CD4-positive, alpha-beta memory T cell (primary cell): ENCODE measurements at regions of chr16 and their contacts with region 1.

Region 1: DNA sequence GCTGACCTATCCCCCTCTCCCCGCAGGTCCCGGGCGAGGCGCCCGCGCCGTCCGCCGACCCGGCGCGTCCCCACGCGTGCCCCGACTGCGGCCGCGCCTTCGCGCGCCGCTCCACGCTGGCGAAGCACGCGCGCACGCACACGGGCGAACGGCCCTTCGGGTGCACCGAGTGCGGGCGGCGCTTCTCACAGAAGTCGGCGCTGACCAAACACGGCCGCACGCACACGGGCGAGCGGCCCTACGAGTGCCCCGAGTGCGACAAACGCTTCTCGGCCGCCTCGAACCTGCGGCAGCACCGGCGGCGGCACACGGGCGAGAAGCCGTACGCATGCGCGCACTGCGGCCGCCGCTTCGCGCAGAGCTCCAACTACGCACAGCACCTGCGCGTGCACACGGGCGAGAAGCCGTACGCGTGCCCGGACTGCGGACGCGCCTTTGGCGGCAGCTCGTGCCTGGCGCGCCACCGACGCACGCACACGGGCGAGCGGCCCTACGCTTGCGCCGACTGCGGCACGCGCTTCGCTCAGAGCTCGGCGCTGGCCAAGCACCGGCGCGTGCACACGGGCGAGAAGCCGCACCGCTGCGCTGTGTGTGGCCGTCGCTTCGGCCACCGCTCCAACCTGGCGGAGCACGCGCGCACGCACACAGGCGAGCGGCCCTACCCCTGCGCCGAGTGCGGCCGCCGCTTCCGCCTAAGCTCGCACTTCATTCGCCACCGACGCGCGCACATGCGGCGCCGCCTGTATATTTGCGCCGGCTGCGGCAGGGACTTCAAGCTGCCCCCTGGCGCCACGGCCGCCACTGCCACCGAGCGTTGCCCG is 10.3 kb downstream of the ZNF771 start:
- DNase-seq: peak; percentile 89 to 93 (median 91)
- H3K4me3 ChIP-seq: peak overlapping the region; percentile 12 to 68
- H3K4me3 Mint-ChIP-seq: peak overlapping the region; percentile 39 to 85 (median 68)
- H3K27ac ChIP-seq: peak overlapping the region; percentile 61
- H3K27ac Mint-ChIP-seq: peak overlapping the region in 3 of 7 donors; percentile 41 to 90 (median 74)
- H3K4me1 ChIP-seq: peaks cover 15% of the 10 kb centered on the region
- H3K4me1 Mint-ChIP-seq: peaks cover 6 to 24% (median 13%) of the 10 kb centered on the region in 4 donors
- H3K27me3 ChIP-seq: no peaks in the 10 kb centered on the region
- H3K27me3 Mint-ChIP-seq: no peaks in the 10 kb centered on the region

Region 2: GRCh38 chr16:30183233-30184095 is 234.3 kb before region 1 on chr16 and contains the start of gene CORO1A:
- CTCF ChIA-PET with region 1: interaction called, 3 read pairs
- POLR2A ChIA-PET with region 1: interaction called, 15 read pairs
- intact Hi-C with region 1: no loop called
- DNase-seq: peak; percentile 80 to 87 (median 84)
- H3K4me3 ChIP-seq: peak within 1 kb of the TSS; percentile 91 to 93
- H3K4me3 Mint-ChIP-seq: peak within 1 kb of the TSS; percentile 94 to 99 (median 98)
- H3K27ac ChIP-seq: peak within 1 kb of the TSS; percentile 77
- H3K27ac Mint-ChIP-seq: peak within 1 kb of the TSS; percentile 96 to 99 (median 97)
- H3K4me1 ChIP-seq: peaks cover 40% of the 10 kb centered on the region
- H3K4me1 Mint-ChIP-seq: peaks cover 15 to 59% (median 29%) of the 10 kb centered on the region in 4 donors
- H3K27me3 ChIP-seq: no peaks in the 10 kb centered on the region
- H3K27me3 Mint-ChIP-seq: no peaks in the 10 kb centered on the region
- total RNA-seq, gene CORO1A: 745 to 769 TPM

Region 3: GRCh38 chr16:30378236-30379204 is 39.2 kb before region 1 on chr16:
- CTCF ChIA-PET with region 1: interaction called, 3 read pairs
- POLR2A ChIA-PET with region 1: interaction called, 540 read pairs
- intact Hi-C with region 1: no loop called
- DNase-seq: peak; percentile 98 to 99 (median 99)
- H3K4me3 ChIP-seq: peak overlapping the region; percentile 84 to 91
- H3K4me3 Mint-ChIP-seq: peak overlapping the region; percentile 91 to 100 (median 96)
- H3K27ac ChIP-seq: peak overlapping the region; percentile 96
- H3K27ac Mint-ChIP-seq: peak overlapping the region; percentile 97 to 100 (median 100)
- H3K4me1 ChIP-seq: peaks cover 69% of the 10 kb centered on the region
- H3K4me1 Mint-ChIP-seq: peaks cover 32 to 71% (median 48%) of the 10 kb centered on the region in 4 donors
- H3K27me3 ChIP-seq: no peaks in the 10 kb centered on the region
- H3K27me3 Mint-ChIP-seq: no peaks in the 10 kb centered on the region

Region 4: GRCh38 chr16:30445408-30446202 is 27.9 kb after region 1 on chr16 and contains the start of gene SEPHS2:
- CTCF ChIA-PET with region 1: interaction called, 13 read pairs
- POLR2A ChIA-PET with region 1: interaction called, 18 read pairs
- intact Hi-C with region 1: no loop called
- DNase-seq: peak; percentile 93 to 98 (median 94)
- H3K4me3 ChIP-seq: peak within 1 kb of the TSS; percentile 92 to 94
- H3K4me3 Mint-ChIP-seq: peak within 1 kb of the TSS; percentile 89 to 98 (median 96)
- H3K27ac ChIP-seq: peak within 1 kb of the TSS; percentile 96
- H3K27ac Mint-ChIP-seq: peak within 1 kb of the TSS; percentile 87 to 98 (median 96)
- H3K4me1 ChIP-seq: peaks cover 42% of the 10 kb centered on the region
- H3K4me1 Mint-ChIP-seq: peaks cover 24 to 44% (median 36%) of the 10 kb centered on the region in 4 donors
- H3K27me3 ChIP-seq: no peaks in the 10 kb centered on the region
- H3K27me3 Mint-ChIP-seq: no peaks in the 10 kb centered on the region
- total RNA-seq, gene SEPHS2: 42.0 to 44.4 TPM

Region 5: GRCh38 chr16:30472328-30472942 is 54.7 kb after region 1 on chr16 and contains the start of gene ITGAL:
- CTCF ChIA-PET with region 1: interaction called, 7 read pairs
- POLR2A ChIA-PET with region 1: interaction called, 15 read pairs
- intact Hi-C with region 1: no loop called
- DNase-seq: peak; percentile 87 to 97 (median 89)
- H3K4me3 ChIP-seq: peak within 1 kb of the TSS; percentile 77 to 96
- H3K4me3 Mint-ChIP-seq: peak within 1 kb of the TSS; percentile 98 to 99 (median 98)
- H3K27ac ChIP-seq: peak within 1 kb of the TSS; percentile 89
- H3K27ac Mint-ChIP-seq: peak within 1 kb of the TSS; percentile 93 to 97 (median 95)
- H3K4me1 ChIP-seq: peaks cover 67% of the 10 kb centered on the region
- H3K4me1 Mint-ChIP-seq: peaks cover 33 to 75% (median 45%) of the 10 kb centered on the region in 4 donors
- H3K27me3 ChIP-seq: no peaks in the 10 kb centered on the region
- H3K27me3 Mint-ChIP-seq: no peaks in the 10 kb centered on the region
- total RNA-seq, gene ITGAL: 648 to 657 TPM

Region 6: GRCh38 chr16:30571695-30572600 is 154.2 kb after region 1 on chr16 and contains the start of gene ZNF688:
- CTCF ChIA-PET with region 1: no interaction called
- POLR2A ChIA-PET with region 1: interaction called, 18 read pairs
- intact Hi-C with region 1: no loop called
- DNase-seq: peak; percentile 94 to 100 (median 97)
- H3K4me3 ChIP-seq: peak within 1 kb of the TSS; percentile 65 to 71
- H3K4me3 Mint-ChIP-seq: peak within 1 kb of the TSS; percentile 86 to 96 (median 91)
- H3K27ac ChIP-seq: peak within 1 kb of the TSS; percentile 90
- H3K27ac Mint-ChIP-seq: peak within 1 kb of the TSS; percentile 96 to 97 (median 97)
- H3K4me1 ChIP-seq: peaks cover 50% of the 10 kb centered on the region
- H3K4me1 Mint-ChIP-seq: peaks cover 22 to 51% (median 36%) of the 10 kb centered on the region in 4 donors
- H3K27me3 ChIP-seq: no peaks in the 10 kb centered on the region
- H3K27me3 Mint-ChIP-seq: no peaks in the 10 kb centered on the region
- total RNA-seq, gene ZNF688: 21.4 to 22.7 TPM